Activated T-helper 1 cell treated with anti-CD3 and anti-CD28 coated beads, Interleukin-12 subunit alpha, Interleukin-12 subunit beta, Interleukin-2, Interleukin-4 antibody, amounts not matched to agents 30 ng/mL and 10 ng/mL and 1 ng/mL, durations not matched to agents 14 hours and 24 hours and 36 hours (primary cell): ENCODE measurements at regions of chr15 and their contacts with region 1.

Region 1: DNA sequence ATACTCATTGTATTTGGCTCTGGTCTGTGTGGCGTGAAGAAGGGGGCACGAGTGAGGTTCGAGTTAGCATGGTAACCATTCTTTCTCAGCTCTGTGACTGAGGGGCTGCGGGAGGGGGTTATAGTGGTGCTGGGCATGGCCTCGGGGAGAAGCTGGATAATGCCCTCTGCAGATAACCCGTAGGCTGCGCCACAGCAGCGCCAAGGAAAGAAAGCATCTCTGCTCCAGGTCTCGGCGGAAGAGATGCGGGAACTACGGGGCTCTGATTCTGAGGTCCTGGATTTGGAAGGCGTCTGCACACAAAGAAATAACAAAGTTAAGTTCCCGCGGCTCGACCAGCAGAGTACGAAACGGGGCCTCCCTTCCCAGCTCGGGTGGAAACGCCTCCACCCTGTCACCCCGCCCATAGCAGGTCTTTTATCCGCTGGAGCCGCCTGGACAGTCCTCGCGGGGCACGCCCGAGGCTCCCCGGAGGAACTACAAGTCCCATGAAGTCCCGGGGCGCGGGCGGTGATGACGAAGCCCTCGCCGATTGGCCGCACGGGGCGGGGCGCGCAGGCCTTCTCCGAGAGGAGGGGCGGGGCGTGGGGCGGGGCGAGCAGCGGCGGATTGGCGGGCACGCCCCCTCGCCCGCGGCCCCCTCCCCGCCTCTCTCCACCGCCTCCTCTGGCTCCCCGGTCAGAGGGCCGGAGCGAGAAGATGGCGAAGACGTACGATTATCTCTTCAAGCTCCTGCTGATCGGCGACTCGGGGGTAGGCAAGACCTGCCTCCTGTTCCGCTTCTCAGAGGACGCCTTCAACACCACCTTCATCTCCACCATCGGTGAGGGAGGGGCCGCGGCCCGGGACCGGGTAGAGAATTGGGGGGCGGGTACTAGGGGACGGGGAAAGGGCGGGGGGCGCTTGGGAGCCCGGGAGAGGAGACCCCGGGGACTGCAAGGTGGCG is at the start of gene RAB8B:
- DNase-seq: peak; percentile 95
- H3K4me3 Mint-ChIP-seq: peak within 1 kb of the TSS; percentile 96
- H3K27ac Mint-ChIP-seq: peak within 1 kb of the TSS; percentile 92
- H3K4me1 Mint-ChIP-seq: peaks cover 48% of the 10 kb centered on the region
- H3K27me3 Mint-ChIP-seq: peaks cover 10% of the 10 kb centered on the region
- total RNA-seq, gene RAB8B: 135 and 149 TPM in 2 replicates

Region 2: DNA sequence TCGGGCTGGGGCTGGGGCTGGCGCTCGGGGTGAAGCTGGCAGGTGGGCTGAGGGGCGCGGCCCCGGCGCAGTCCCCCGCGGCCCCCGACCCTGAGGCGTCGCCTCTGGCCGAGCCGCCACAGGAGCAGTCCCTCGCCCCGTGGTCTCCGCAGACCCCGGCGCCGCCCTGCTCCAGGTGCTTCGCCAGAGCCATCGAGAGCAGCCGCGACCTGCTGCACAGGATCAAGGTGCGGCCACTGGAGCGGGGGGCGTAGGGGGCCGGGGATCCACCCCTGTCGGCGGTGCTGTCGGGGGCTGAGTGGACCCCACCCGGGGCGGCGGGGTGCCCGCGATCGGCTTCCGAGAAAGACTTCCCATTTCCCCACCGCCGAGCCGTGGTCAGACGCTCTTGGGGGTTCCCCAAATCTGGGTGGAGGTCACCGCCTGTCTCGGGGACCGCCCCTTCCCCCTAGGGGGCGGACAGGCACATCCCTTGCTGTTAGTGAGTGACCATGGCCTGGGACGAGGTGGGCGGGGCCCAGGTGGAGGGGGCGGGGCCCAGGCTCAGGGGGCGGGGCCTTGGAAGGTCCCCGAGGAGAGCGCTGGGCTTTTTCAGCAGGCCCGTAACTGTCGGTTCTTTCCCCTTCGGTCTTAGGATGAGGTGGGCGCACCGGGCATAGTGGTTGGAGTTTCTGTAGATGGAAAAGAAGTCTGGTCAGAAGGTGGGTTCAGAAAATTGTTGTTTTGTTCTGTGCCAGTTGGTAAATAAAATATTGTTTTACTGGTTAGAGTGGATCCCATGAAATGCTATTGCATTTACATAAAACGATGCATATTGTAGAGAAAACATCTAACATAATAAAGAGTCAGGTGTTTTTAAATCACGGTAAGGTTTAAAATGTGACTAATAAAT is 67.0 kb before region 1 on chr15:
- intact Hi-C with region 1: loop called (anchors 1 kb)
- DNase-seq: peak; percentile 83
- H3K4me3 Mint-ChIP-seq: peak overlapping the region; percentile 93
- H3K27ac Mint-ChIP-seq: peak overlapping the region; percentile 83
- H3K4me1 Mint-ChIP-seq: peaks cover 21% of the 10 kb centered on the region
- H3K27me3 Mint-ChIP-seq: no peaks in the 10 kb centered on the region

Region 3: DNA sequence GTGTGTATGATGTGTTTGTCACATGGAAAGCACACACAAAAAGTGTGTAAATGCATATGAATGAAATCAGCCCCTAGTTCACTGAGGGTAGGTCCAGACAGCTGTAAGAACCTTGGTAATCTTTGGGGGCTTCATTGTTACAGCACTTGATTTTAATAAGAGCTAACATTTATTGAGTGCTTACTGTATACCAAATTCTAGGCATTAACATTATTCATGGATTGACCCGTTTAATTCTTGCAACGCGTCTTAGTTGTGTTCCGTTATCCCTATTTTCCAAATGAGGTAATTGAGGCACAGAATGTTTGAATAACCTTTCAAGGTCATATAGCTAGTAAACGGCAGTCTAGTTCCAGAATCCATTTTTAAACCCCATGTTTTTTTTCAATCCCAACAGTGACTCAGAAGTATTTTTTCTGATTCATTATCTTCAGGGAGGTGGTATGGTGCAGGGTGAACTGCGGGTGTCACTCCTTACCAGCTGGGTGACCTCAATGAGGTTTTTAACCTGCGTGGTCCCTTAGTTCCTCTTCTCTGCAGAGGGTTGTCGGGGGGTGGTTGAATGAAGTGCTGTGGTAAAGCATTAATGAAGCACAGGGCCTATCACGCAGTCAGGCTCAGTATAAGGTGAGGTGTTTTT is 14.4 kb after region 1 on chr15:
- intact Hi-C with region 1: loop called (anchors 1 kb)
- DNase-seq: no peak
- H3K4me3 Mint-ChIP-seq: no peak overlapping the region
- H3K27ac Mint-ChIP-seq: peak overlapping the region; percentile 2
- H3K4me1 Mint-ChIP-seq: peaks cover 77% of the 10 kb centered on the region
- H3K27me3 Mint-ChIP-seq: no peaks in the 10 kb centered on the region

Region 4: DNA sequence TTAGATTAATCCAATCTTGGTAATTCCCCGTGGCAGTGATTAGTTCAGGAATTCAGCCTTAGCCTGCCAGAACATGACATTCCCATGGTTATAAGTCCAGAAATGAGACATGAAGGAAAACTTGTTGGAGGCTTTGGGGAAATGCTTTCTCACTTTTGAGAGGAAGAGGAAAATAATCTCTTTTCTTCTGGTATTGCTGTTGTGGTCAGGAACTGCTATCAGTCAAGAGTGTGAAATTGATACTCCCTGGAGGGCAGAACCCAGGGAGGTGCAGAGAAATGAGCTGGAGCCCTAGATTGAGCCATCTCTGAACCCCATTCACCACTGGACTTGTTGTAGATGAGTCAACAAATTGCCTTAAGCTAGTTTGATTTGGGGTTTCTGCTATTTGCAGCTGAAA is 49.6 kb after region 1 on chr15:
- intact Hi-C with region 1: loop called (anchors 1 kb)
- DNase-seq: peak; percentile 3
- H3K4me3 Mint-ChIP-seq: no peak overlapping the region
- H3K27ac Mint-ChIP-seq: peak overlapping the region; percentile 23
- H3K4me1 Mint-ChIP-seq: peaks cover 57% of the 10 kb centered on the region
- H3K27me3 Mint-ChIP-seq: peaks cover 2% of the 10 kb centered on the region

Region 5: GRCh38 chr15:63473999-63474809 is 285.0 kb after region 1 on chr15:
- intact Hi-C with region 1: loop called (anchors 5 kb)
- DNase-seq: peak; percentile 52
- H3K4me3 Mint-ChIP-seq: peak overlapping the region; percentile 66
- H3K27ac Mint-ChIP-seq: peak overlapping the region; percentile 95
- H3K4me1 Mint-ChIP-seq: peaks cover 54% of the 10 kb centered on the region
- H3K27me3 Mint-ChIP-seq: peaks cover 1% of the 10 kb centered on the region

Region 6: DNA sequence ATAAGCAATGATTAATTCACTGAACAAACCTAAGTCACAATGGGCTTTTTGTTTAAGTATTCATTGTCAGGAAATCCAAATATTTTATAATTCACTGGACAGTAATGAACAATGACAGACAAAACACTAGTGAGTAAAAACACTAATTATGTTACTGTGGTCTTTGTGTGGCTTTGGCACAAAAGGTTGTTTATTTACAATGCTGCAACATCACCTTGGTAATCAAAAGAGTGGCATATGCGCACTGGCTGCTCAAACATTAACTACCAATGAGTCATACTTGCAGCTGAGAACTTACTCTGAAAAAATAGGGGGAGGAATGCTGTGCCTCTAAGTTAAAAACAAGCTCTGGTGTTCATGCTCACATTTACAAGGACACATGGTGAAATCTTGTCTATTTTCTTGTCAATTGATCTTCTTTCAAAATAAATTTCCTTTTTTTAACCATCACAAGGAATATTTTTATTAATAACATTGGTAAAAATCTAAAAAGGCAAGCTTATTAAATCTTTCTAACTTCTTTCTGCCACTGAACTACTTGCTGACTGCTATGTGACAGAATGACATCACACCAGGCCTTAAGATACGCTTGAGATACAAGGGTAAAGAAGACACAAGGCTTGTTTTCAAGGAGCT is 1058.8 kb after region 1 on chr15:
- intact Hi-C with region 1: loop called (anchors 10 kb)
- DNase-seq: peak; percentile 27
- H3K4me3 Mint-ChIP-seq: peak overlapping the region; percentile 6
- H3K27ac Mint-ChIP-seq: peak overlapping the region; percentile 76
- H3K4me1 Mint-ChIP-seq: peaks cover 57% of the 10 kb centered on the region
- H3K27me3 Mint-ChIP-seq: peaks cover 2% of the 10 kb centered on the region